Activated CD4-positive, alpha-beta T cell treated with anti-CD3 and anti-CD28 coated beads, Interleukin-2, amount 10 ng/mL, durations not matched to agents 24 days and 14 days (primary cell): ENCODE measurements at regions of chr12 and their contacts with region 1.

Region 1: DNA sequence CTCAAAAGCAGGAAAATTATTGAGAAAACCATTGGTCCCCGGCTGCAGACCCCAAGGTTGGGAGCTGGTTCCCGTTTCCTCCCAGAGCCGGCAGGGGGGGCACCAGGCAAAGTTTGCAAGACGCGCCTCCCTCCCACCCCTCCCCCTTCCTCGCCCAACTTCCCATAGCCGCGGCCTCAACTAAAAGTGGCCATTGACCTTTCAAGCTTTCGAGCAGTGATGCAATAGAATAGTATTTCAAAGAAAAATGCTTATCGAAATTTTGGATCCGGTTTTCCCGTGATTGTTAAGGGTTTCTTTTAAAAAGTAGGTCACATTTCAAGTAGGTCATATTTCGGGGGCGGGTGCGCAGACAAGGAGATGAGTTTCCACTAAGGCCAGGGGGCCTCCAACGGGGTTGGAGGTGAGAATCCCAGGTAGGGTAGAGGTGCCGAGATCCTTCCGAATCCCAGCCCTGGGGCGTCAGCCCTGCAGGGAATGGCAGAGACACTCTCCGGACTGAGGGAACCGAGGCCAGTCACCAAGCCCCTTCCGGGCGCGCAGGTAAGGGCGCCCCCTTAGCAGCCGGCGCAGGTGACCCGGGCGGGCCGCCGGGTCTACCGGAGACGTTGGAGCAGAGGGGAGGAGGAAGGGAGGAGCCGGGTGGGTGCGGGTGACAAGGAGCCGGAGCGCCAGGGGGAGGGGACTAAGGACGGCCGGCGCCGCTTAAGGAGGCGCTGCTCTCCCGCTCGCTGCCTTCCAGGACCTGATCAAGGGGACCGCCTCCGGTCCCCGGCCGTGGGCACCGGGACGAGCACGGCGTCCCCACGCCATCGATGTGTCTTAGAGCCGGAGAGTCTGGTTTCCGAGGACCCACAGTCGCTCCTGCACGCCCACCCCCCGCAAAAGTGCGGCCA is 2.6 kb upstream of the SOCS2 start:
- DNase-seq: peak; percentile 92
- H3K4me3 Mint-ChIP-seq: peak overlapping the region; percentile 80
- H3K27ac Mint-ChIP-seq: peak overlapping the region; percentile 86
- H3K4me1 Mint-ChIP-seq: peaks cover 30% of the 10 kb centered on the region
- H3K27me3 Mint-ChIP-seq: peaks cover 14% of the 10 kb centered on the region

Region 2: GRCh38 chr12:92987362-92987761 is 582.5 kb before region 1 on chr12:
- intact Hi-C with region 1: loop called (anchors 5 kb)
- DNase-seq: peak; percentile 77
- H3K4me3 Mint-ChIP-seq: peak overlapping the region; percentile 18
- H3K27ac Mint-ChIP-seq: peak overlapping the region; percentile 66
- H3K4me1 Mint-ChIP-seq: peaks cover 22% of the 10 kb centered on the region
- H3K27me3 Mint-ChIP-seq: peaks cover 3% of the 10 kb centered on the region

Region 3: DNA sequence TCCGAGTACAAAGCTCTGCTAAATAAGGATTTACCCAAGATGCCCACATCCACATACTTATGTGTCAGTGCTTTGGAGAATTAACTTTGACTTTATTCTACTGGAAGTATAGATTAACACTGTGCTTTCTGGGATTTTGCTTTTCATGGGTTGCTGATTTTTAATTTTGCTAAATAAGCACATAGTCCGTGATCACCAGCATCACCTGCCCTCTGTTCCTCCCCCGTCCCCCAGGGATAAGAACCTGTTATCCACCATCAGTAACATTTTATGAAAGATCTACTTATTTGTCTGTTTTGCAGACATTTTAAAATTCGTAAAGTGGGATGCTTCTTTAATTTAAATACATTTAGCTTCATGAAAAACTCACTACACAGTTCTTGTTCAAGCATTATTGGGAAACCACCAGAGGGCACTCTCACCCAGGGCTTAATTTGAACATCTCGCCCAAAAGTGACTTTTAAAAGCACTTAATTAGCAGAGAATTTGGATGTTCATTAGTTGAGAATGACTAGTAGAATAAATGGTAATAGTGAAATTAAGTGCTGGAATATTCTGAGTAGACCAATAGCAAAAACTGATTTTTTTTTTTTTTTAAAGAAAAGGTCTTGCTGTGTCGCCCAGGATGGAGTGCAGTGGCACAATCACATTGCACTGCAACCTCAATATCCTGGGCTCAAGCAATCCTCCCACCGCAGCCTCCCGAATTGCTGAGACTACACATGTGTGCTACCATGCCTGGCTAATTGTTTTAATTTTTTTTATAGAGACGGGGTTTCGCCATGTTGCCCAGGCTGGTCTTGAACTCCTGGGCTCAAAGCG is 66.9 kb before region 1 on chr12:
- intact Hi-C with region 1: loop called (anchors 2 kb)
- DNase-seq: peak; percentile 90
- H3K4me3 Mint-ChIP-seq: no peak overlapping the region
- H3K27ac Mint-ChIP-seq: no peak overlapping the region
- H3K4me1 Mint-ChIP-seq: peaks cover 18% of the 10 kb centered on the region
- H3K27me3 Mint-ChIP-seq: no peaks in the 10 kb centered on the region

Region 4: DNA sequence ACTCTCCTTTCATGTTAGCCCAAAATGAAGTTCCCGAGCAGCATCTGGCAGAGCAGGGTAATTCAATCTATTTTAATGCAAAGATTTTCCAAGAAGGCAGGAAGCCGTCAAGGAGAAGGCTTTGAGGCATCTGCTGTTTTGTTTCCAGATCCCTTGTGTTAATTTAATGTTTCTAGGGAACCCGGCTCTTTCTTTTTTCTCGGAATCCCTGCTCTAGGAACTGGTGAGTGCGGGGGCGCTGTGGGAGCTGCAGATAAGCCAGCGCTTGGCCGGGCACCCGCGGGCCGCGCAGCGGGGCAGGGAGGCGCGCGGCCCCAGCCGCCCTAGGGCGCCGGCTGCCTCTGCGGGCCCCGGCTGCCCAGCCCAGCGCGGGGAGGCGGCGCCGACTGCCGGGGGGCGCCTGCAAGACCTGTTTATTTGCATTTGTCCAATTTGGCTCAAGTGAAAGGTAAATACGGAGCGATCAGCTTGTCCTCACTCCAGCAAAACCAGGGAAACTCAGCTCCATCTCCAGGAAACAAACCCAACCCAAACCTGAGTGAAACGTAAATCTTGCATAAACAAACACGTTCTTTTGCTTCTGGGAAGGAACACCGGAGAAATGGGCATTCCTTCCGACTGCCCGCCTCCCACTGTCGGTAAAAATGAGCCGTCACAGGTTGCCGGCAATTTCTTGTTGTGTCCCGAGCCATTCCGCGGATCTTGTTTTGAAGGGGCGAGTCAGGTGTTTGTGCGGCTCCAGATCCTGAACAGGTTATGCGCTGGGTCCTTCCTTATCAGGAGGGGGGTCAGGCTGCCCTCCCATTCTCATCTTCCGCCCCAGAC is 172.4 kb after region 1 on chr12:
- intact Hi-C with region 1: loop called (anchors 1 kb)
- DNase-seq: peak; percentile 87
- H3K4me3 Mint-ChIP-seq: peak overlapping the region; percentile 91
- H3K27ac Mint-ChIP-seq: peak overlapping the region; percentile 91
- H3K4me1 Mint-ChIP-seq: peaks cover 26% of the 10 kb centered on the region
- H3K27me3 Mint-ChIP-seq: no peaks in the 10 kb centered on the region

Region 5: DNA sequence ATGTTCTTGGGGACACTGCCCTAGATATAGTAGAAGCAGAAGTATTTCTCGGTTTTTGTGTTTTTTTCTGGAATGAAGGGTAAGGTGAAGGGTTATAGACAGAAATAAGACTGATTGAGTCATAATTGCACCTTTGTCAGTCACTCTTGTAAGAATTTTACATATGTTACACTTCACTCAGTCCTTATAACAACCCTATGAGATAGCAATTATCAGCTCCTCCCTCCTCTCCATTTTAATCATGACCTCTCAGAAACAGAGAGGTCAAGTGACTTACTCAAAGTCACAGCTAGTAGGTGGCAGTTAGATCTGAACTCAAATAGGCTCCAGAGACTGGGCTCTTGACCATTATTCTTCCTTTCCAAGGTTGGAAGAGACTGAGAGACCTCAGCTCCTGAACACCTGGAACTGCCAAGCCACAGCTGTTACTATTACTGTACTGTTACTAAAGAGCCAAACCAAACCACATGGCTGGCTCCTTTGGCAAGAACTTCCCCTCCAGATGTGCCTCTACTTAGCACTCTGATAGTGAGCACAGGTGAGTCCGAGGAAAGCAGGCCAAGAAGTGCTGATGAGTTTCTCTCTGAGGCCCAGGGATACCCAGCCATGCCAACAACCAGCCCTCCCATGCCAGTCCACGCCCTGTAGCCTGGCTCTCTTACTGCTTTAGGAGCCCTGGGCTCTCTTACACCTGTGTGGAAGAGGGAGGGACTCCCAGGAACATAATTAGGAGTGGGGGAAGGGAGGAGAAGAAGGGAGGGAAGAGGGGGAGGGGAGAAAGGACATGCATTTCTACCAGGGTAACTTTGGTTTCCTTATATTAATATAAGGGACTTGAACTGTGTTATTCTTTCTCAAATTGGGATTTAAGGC is 228.6 kb after region 1 on chr12:
- intact Hi-C with region 1: no loop called
- DNase-seq: no peak
- H3K4me3 Mint-ChIP-seq: no peak overlapping the region
- H3K27ac Mint-ChIP-seq: no peak overlapping the region
- H3K4me1 Mint-ChIP-seq: peaks cover 18% of the 10 kb centered on the region
- H3K27me3 Mint-ChIP-seq: no peaks in the 10 kb centered on the region

Region 6: GRCh38 chr12:93847517-93848474 is 277.9 kb after region 1 on chr12:
- intact Hi-C with region 1: loop called (anchors 5 kb)
- DNase-seq: peak; percentile 73
- H3K4me3 Mint-ChIP-seq: peak overlapping the region; percentile 43
- H3K27ac Mint-ChIP-seq: peak overlapping the region; percentile 62
- H3K4me1 Mint-ChIP-seq: peaks cover 48% of the 10 kb centered on the region
- H3K27me3 Mint-ChIP-seq: no peaks in the 10 kb centered on the region

Region 7: GRCh38 chr12:94459728-94460615 is 890.1 kb after region 1 on chr12 and contains the start of gene CEP83:
- intact Hi-C with region 1: loop called (anchors 5 kb)
- DNase-seq: peak; percentile 100
- H3K4me3 Mint-ChIP-seq: peak within 1 kb of the TSS; percentile 98
- H3K27ac Mint-ChIP-seq: peak within 1 kb of the TSS; percentile 98
- H3K4me1 Mint-ChIP-seq: peaks cover 29% of the 10 kb centered on the region
- H3K27me3 Mint-ChIP-seq: peaks cover 4% of the 10 kb centered on the region
- total RNA-seq, gene CEP83: 36.9 and 38.7 TPM in 2 replicates